ENCODE measurements at regions of chr15 and their contacts with region 1.

Region 1: DNA sequence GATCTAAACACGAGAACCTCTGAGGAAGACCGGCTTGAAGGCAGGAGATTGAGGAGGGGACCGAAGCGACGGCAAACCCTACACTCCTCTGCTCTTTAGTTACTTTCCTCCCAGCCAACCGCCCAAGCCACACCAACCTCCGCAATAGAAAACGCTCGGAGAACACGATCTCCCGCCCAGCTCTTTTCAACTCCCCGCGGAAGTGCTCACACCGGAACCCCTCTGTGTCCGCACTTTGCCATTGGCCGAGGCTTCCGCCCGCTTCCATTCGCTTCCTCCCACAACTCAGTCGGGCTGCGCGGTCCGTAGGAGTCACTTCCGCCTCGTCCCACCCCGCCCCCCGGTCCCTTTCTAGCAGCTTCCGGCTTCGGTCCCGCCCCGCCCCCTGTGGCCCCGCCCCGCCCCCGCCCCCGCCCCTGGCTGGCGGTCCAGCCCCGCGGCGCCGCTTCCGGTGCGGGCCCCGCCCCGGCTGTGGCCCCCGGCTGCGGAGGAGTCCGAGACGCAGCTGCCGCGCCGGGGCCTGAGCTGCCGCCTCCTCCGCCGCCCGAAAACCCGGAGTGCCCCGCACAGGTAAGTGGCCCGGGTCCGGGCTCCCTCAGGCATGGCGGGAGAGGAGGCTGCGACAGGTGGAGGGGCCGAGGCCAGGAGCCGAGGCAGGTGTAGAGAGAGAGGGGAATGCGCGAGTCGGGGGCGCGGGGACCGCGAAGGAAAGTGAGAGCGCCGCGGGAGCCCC is at the start of gene ARID3B:
- DNase-seq: peak; percentile 97
- H3K27ac ChIP-seq: peak within 1 kb of the TSS; percentile 83
- CTCF ChIP-seq: no peak

Region 2: GRCh38 chr15:74449095-74449494 is 91.8 kb before region 1 on chr15:
- CTCF ChIA-PET with region 1: no interaction called
- POLR2A ChIA-PET with region 1: interaction called, 10 read pairs
- DNase-seq: no peak
- H3K27ac ChIP-seq: no peak overlapping the region
- CTCF ChIP-seq: no peak

Measured in RWPE1 (cell line).